ENCODE measurements at regions of chr17 and their contacts with region 1.

Region 1: DNA sequence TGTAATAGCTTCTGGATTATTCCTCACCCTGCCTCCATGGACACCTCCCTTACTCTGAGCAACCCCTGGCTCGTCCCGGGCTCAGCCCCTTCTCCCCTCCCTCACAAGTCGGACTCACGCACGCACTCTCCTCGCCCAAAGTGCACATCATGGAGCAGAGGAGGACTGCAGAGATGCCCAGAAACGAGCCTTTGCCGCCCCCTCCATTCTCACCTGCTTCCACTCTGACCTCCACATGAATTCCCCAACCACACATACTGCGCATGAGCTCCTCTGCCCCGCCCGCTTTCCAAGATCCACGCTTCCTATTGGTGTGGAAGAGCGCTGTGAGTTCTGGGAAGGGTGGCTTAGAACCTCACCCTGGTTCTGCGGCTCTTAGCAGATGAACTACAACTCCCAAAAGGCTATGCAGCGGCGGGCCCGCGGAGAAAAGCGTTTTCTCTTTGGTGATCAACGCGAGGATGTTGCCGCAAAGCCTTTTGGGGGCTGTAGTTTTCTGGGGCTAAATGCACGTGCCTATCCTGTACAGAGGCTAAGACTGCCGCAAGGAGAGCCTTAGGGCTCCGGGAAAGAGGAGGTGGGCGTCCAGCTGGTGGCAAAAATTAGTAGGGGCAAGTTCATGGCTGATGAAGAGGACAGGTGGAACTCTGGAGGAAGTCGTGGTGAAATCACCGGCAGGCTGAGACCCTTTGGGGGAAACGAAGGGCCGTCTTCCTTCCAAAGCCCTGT is at the start of gene PHB1:
- DNase-seq: peak; percentile 99
- H3K4me3 ChIP-seq: peak within 1 kb of the TSS; percentile 85
- H3K27ac ChIP-seq: peak within 1 kb of the TSS; percentile 62
- H3K4me1 ChIP-seq: peaks cover 10% of the 10 kb centered on the region
- H3K27me3 ChIP-seq: no peaks in the 10 kb centered on the region
- CTCF ChIP-seq: no peak
- total RNA-seq, gene PHB1: 430 and 451 TPM in 2 replicates

Region 2: GRCh38 chr17:48915459-48916282 is 499.1 kb before region 1 on chr17:
- CTCF ChIA-PET with region 1: no interaction called
- POLR2A ChIA-PET with region 1: no interaction called
- intact Hi-C with region 1: no loop called
- DNase-seq: peak; percentile 33
- H3K4me3 ChIP-seq: no peak overlapping the region
- H3K27ac ChIP-seq: peak overlapping the region; percentile 68
- H3K4me1 ChIP-seq: peaks cover 13% of the 10 kb centered on the region
- H3K27me3 ChIP-seq: no peaks in the 10 kb centered on the region
- CTCF ChIP-seq: no peak

Region 3: DNA sequence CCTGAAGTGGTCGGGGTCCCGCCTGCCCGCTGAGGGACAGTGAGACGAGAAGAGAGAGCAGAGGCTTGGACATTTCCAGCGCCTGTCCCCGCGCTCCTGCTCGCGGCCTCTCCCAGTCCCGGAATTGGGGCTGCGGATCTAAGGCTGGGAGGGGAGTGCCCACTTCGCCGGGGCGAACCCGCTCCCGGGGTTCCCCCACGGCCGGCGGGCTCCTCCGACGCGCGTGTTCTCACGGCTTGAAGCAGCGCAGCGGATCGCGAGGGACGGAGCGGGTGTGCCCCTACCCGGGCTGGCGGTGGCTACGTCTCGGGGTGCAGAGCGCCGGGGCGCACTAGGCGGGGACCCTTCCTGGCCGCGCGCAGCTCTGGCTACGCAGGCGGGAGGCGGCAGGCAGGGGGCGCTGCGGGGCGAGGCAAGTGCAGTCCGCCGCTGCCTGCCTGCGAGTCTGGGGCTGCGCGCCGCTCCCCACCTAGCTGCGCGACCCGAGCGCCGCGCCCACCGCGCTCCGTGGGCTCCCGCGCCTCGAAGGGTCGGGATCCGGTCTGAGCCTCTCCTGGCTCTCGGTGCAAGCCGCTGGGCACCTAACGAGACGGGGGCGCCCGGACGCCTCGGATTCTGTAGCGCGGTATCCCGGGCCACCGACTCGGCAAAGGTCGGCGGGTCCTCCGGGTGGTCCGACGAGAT is 81.5 kb after region 1 on chr17:
- CTCF ChIA-PET with region 1: interaction called, 6 read pairs
- POLR2A ChIA-PET with region 1: no interaction called
- intact Hi-C with region 1: loop called (anchors 5 kb)
- DNase-seq: peak; percentile 86
- H3K4me3 ChIP-seq: peak overlapping the region; percentile 84
- H3K27ac ChIP-seq: no peak overlapping the region
- H3K4me1 ChIP-seq: peaks cover 33% of the 10 kb centered on the region
- H3K27me3 ChIP-seq: no peaks in the 10 kb centered on the region
- CTCF ChIP-seq: peak; percentile 71